ENCODE measurements at regions of chr2 and their contacts with region 1.

Region 1: DNA sequence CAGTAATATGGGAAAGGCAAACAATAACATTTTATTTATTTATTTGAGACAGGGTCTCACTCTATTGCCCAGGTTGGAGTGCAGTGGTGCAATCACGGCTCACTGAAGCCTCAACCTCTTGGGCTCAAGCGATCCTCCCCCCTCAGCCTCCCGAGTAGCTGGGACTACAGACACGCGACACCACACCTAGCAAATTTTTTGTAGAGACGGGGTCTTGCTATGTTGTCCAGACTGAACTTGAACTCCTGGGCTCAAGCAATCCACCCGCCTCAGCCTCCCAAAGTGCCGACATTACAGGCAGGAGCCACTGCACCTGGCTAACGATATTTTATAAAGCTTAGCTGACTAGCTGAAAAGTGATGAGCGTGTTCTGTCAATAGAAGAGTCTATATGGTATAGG is 17.5 kb upstream of the PLEKHH2 start:
- DNase-seq: no peak
- ATAC-seq: no peak

Region 2: DNA sequence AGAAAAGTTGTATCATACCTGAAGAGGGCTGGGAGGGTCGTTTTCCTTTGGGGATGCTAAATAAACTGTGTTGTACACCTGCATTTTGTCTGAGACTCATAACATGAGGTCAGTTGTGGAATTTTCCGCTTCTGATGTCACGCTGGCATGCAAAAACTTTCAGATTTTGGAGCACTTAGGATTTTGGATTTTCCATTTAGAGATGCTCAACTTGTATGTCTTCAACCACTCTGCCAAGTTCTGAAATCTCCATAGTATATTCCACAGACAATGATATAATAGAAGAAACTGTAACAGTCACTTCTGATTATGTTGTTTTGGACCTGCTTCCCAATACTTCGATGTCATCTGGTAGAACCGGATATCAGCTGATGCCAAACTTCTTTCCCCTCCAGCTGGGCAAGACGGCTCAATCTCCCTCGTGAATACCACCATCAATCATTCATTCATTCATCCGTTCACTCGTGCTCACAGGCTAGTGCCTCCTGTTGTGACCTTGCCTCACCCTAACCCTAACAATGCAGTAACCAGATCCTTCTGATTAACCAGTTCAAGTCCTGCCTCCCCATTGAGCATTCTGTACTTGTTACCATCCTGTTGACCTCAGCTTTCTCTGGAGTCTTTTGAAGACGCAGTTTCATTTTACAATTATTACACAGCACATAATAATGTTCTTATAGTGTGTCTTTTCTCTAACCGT is 12.3 kb after region 1 on chr2:
- intact Hi-C with region 1: loop called (anchors 2 kb)
- DNase-seq: no peak
- ATAC-seq: no peak